ENCODE measurements at regions of chr1 and their contacts with region 1.

Region 1: DNA sequence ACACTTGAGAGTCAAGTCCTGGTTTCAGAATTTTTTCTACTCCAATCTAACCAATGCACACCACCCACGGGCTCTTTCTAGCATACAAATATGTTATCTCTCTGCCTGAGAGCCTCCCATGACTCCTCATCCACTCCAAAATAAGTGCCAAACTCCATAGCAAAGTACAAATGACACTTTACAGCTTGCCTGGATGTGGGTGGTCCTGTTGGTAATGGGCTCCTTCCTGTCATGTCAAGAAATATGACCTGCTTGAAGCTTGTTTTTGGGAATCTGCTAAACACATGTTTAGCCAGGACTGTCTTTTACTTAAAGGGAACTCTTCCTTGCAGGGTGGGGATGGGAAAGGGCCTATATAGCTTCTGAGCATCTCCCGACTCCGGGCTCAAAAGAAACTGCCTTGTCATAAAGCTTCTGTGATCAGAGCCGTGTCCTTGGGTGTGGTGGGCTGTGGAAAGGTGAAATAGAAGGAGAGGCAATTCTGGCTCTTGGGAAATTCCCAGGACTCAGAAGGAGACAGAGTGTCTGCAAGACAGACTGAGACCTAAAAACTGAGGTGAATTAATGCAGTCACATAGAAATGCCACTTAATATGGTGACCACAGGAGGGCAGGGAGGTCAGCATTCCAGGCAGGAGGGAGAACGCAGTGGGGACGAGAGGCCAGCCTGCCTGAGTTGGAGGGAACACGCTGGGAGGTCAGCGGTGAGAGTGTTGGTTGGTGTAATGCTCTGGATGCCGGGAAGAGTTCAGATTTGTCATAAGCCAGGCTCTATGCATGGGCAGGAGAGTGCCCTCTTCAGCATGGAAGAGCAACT is 6.1 kb upstream of the IGFN1 start:
- DNase-seq: peak; percentile 90
- H3K4me3 Mint-ChIP-seq: no peak overlapping the region
- H3K27ac Mint-ChIP-seq: no peak overlapping the region
- H3K4me1 Mint-ChIP-seq: peaks cover 6% of the 10 kb centered on the region
- H3K27me3 Mint-ChIP-seq: peaks cover 22% of the 10 kb centered on the region
- CTCF ChIP-seq: peak; percentile 94

Region 2: GRCh38 chr1:201137579-201138310 is 46.8 kb before region 1 on chr1:
- CTCF ChIA-PET with region 1: interaction called, 10 read pairs
- POLR2A ChIA-PET with region 1: no interaction called
- intact Hi-C with region 1: no loop called
- DNase-seq: peak; percentile 78
- H3K4me3 Mint-ChIP-seq: no peak overlapping the region
- H3K27ac Mint-ChIP-seq: no peak overlapping the region
- H3K4me1 Mint-ChIP-seq: peaks cover 11% of the 10 kb centered on the region
- H3K27me3 Mint-ChIP-seq: no peaks in the 10 kb centered on the region
- CTCF ChIP-seq: no peak

Region 3: DNA sequence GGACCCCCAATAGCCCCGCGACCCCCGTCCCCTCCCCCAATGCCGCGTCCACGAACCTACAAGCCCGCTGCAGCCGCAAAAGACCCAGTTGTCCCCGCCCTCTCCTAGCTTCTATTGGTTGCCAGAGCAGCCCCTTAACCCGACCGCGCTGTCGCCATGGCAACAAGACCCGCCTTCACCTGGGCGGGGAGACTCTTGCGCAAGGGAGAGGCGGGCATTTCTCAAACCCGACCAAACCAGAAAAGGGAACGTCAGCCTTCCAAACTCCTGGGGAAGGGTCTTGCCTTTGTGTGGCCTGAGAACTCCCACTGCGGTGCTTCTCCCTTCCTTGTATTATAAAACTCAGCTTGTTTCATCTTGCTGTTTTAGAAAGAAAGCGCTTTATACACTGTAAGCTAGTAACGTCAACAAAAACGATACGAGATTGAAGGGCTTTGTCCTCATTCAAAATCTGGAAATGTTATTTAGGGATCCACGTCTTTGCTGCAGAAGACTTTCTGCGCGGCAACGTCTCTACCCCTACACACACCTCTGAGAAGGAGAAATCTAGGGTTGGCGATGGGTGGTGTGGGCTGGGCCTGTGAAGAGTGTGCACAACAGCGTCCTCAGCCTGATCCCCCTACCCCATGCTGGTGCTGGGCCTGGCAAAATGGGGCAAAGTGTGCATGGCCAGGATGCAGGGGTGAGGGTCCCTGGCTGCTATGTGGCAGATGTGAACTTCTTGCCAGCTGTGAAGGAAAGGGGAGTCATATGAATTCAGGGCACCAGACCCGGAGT is 29.9 kb before region 1 on chr1 and contains the start of gene TMEM9:
- CTCF ChIA-PET with region 1: interaction called, 109 read pairs
- POLR2A ChIA-PET with region 1: interaction called, 4 read pairs
- intact Hi-C with region 1: loop called (anchors 1 kb)
- DNase-seq: peak; percentile 99
- H3K4me3 Mint-ChIP-seq: peak within 1 kb of the TSS; percentile 82
- H3K27ac Mint-ChIP-seq: peak within 1 kb of the TSS; percentile 14
- H3K4me1 Mint-ChIP-seq: peaks cover 5% of the 10 kb centered on the region
- H3K27me3 Mint-ChIP-seq: peaks cover 12% of the 10 kb centered on the region
- CTCF ChIP-seq: no peak
- total RNA-seq, gene TMEM9: 67.2 and 71.7 TPM in 2 replicates

Region 4: GRCh38 chr1:201206176-201206575 is 21.7 kb after region 1 on chr1:
- CTCF ChIA-PET with region 1: interaction called, 11 read pairs
- POLR2A ChIA-PET with region 1: no interaction called
- intact Hi-C with region 1: no loop called
- DNase-seq: no peak
- H3K4me3 Mint-ChIP-seq: no peak overlapping the region
- H3K27ac Mint-ChIP-seq: no peak overlapping the region
- H3K4me1 Mint-ChIP-seq: no peaks in the 10 kb centered on the region
- H3K27me3 Mint-ChIP-seq: peaks cover 61% of the 10 kb centered on the region
- CTCF ChIP-seq: no peak